Activated naive CD4-positive, alpha-beta T cell treated with anti-CD3 and anti-CD28 coated beads, Interleukin-2, amount 10 ng/mL, durations not matched to agents 7 days and 5 days (primary cell): ENCODE measurements at regions of chr13 and their contacts with region 1.

Region 1: DNA sequence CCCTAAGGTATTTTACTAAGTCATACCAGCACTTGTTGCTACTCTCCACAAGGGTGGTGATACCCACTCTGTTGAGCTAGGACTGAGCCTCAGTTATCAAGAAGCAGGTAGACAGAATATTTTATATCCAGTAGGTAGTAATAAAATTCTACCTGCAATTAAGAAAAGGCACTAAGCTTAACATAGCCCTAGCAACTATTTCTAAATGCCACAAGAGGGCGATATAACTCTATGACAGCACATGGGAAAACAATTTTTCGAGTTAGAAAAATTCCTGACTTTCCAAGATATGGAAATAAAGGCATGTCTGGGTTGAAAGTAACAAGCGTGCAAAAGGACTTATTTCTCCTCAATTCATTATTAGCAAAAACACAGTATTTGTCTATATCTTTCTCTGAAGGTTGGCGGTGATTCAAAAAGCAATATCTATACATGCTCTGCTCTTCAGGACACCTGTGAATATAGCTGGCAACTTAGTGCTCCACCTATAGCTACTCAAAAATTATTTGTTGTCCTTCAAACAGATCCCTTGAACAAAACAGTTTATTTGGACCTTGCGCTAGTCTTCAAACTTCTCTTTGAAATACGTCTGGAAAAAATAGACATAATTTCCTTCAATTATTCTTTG is 14.7 kb downstream of the CCDC169 start:
- DNase-seq: no peak
- H3K4me3 Mint-ChIP-seq: no peak overlapping the region
- H3K27ac Mint-ChIP-seq: no peak overlapping the region
- H3K4me1 Mint-ChIP-seq: no peaks in the 10 kb centered on the region
- H3K27me3 Mint-ChIP-seq: peaks cover 18% of the 10 kb centered on the region

Region 2: DNA sequence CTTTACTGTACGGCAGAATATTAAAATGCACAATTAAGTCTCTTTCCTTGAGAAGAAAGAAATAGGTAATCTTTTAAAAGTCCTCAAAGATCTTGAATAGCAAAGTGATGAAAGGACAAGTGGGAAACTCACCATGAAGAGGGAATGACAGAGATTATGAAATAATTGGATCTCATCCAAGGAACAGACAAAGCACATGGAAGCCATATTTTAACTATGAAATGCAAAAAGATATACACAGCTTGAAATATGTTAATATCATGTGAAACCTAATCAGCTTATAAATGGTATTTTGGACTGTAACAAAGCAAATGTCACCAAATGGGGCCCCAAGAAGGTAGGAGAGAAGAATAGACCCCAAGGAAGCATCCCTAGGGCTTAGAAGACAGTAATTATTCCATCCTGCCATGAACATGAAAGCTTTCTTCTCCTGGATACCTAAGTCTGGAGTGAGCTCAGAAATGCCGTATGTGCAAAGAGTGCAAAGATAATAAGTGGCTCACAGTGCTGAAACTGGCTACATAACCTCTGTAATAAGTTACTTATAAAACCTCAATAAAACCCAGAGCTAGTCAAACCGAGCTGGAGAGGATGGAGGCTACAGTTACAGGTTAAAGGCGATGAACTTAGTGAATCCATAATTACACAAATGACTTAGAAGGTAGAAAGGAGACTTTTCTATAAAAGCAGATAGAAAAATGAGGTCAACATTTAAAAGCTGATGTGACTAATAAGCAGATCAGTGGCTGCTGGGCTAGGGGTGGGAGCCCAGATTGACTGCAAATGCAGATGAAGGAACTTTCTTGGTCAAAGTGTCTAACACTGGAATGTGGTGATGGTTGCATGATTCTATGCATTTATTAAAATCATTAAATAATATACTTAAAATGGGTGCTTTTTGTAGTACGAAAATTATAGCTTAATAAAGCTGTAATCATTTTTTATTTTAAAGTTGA is 186.2 kb before region 1 on chr13:
- CTCF ChIA-PET with region 1: no interaction called
- DNase-seq: no peak
- H3K4me3 Mint-ChIP-seq: no peak overlapping the region
- H3K27ac Mint-ChIP-seq: no peak overlapping the region
- H3K4me1 Mint-ChIP-seq: no peaks in the 10 kb centered on the region
- H3K27me3 Mint-ChIP-seq: no peaks in the 10 kb centered on the region

Region 3: DNA sequence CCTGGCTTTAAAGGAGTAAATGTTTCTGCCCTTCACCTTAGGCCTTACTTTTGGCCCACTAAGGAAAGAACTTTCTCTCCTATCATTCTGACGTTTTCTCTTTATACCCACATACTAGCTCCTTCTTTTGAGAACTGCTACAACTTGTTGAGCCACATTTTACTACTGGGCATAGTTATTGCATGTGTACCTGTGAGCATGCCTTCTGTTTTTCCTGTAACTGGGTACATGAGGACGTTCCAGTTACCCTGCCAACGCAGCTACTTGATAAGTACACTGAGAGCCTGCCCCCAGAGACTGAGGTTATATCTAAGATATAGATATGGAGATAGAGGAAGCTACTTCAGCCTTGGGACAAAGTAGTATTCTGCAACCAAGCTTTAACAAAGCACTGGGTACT is 11.2 kb after region 1 on chr13:
- CTCF ChIA-PET with region 1: interaction called, 14 read pairs
- DNase-seq: no peak
- H3K4me3 Mint-ChIP-seq: no peak overlapping the region
- H3K27ac Mint-ChIP-seq: no peak overlapping the region
- H3K4me1 Mint-ChIP-seq: peaks cover 19% of the 10 kb centered on the region
- H3K27me3 Mint-ChIP-seq: peaks cover 30% of the 10 kb centered on the region

Region 4: DNA sequence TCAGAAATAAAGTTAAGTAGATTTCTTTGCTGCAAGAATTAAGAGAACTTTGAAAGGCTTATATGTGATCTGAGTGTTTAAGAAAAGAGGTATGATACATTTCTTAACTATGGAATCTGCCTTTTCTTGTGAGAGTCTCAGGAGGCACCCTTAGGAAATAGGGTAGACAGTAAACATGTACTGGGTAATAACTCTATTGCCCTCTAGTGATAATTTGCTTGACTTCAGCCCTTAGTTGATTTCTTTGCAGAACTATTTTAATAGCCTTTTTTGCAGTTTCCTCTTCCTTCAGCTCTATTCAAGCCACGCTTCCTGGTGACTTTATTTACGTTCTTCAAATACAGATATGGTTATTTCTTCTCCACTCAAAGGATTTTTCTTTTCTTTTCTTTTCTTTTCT is 112.3 kb after region 1 on chr13:
- CTCF ChIA-PET with region 1: interaction called, 14 read pairs
- DNase-seq: no peak
- H3K4me3 Mint-ChIP-seq: no peak overlapping the region
- H3K27ac Mint-ChIP-seq: no peak overlapping the region
- H3K4me1 Mint-ChIP-seq: no peaks in the 10 kb centered on the region
- H3K27me3 Mint-ChIP-seq: no peaks in the 10 kb centered on the region

Region 5: DNA sequence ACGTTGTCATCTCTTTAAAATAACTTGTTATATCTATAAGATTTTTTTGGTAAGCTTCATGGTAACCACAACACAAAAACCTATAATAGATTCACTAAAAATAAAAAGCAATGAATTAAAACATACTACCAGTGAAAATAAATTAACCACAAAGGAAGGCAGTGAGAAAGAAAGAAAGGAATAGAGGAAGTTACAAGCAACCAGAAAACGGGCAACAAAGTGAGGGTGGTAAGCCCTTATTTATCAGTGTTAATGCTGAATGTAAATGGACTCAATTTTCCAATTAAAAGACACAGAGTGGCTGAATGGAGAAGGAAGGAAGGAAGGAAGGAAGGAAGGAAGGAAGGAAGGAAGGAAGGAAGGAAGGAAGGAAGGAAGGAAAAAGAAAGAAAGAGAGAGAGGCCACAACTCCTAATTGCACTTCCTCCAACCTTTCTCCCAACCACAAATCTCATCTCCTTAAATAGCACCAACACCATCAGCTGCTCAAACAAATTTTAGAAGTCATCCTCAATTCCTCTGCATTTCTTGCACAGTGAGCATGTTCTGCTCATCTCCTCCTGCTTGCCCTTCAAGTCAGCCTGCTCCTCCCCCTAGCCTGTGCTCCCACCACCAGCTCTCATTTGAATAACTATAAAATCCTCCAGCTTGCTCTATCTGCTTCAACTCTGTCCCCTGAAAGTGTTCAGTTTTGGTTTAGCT is 197.9 kb after region 1 on chr13:
- CTCF ChIA-PET with region 1: no interaction called
- DNase-seq: no peak
- H3K4me3 Mint-ChIP-seq: no peak overlapping the region
- H3K27ac Mint-ChIP-seq: no peak overlapping the region
- H3K4me1 Mint-ChIP-seq: no peaks in the 10 kb centered on the region
- H3K27me3 Mint-ChIP-seq: no peaks in the 10 kb centered on the region